Sciatic nerve (tissue), 2 donors: ENCODE measurements at regions of chr9 and their contacts with region 1.

Region 1: DNA sequence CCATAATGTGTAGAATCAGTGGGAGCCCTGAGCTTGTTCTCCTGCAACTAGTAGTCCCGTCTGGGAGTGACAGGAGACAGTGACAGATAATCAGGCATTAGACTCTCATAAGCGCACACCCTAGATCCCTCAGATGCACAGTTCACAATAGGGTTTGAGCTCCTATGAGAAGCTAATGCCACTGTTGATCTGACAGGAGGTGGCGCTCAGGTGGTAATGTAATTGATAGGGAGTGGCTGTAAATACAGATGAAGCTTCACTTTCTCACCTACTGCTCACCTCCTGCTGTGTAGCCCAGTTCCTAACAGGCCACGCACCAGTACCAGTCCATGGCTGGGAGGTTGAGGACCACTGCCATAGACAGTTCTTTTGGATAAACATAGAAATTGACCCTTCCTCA is 188.7 kb downstream of the ROR2 start:
- DNase-seq: no peak
- ATAC-seq: no peak

Region 2: DNA sequence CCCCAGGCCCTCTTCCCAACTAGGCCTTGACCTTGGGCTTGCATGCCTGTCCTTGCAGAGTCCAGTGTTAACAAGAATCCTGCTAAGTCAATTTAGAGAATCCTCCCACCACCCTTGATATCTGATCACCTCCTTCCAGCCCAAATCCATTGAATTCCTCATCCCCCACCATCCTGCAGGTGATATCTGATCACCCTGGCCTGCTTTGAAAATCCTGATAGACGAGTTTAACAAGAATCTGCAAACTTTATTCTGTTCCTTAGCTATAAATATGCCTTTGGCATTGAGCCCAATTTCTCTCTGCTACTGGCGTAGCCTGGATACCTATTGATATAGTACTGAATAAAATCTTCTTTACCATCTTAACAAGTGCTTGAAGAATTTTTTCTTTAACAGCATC is 1244.3 kb before region 1 on chr9:
- intact Hi-C with region 1: loop called (anchors 5 kb)
- DNase-seq: no peak
- ATAC-seq: no peak

Region 3: GRCh38 chr9:91690540-91691253 is 70.7 kb before region 1 on chr9:
- intact Hi-C with region 1: no loop called
- DNase-seq: no peak
- ATAC-seq: no peak